ENCODE measurements at regions of chr5 and their contacts with region 1.

Region 1: DNA sequence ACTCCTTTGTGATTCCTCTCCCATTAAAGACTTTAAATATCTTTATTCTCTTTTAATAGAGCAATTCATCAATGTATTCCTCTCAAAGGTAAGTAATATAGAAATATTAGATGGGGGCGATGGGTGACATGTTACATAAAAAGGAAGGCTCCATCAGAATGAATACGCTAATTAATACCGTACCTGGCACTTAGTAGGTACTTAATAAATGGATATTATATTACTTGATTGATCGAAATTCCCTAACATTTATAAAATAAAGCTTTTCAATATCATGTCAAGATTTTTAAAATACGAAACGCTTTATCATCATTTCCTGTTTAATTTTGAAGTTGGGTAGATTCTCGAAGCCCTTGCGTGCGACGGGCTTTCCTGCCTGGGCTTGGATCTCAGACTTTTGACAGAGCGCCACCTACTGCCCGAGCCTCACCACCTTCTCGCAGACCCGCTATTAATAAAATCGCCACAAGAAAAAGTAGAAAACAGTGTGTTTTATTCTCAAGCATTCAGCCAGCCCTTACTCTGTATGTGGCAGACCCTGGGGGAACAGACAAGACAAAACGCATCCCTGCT is 99.4 kb downstream of the C5orf15 start:
- DNase-seq: peak; percentile 21
- ATAC-seq: peak; percentile 84
- H3K4me3 ChIP-seq: no peak overlapping the region
- H3K27ac ChIP-seq: no peak overlapping the region
- H3K4me1 ChIP-seq: no peaks in the 10 kb centered on the region
- H3K27me3 ChIP-seq: peaks cover 0 to 31% of the 10 kb centered on the region in 2 experiments; a peak in 3 of 5 replicates
- CTCF ChIP-seq: peak; percentile 76
- EP300 ChIP-seq: no peak
- POLR2A ChIP-seq: no peak
- RAD21 ChIP-seq: no peak

Region 2: DNA sequence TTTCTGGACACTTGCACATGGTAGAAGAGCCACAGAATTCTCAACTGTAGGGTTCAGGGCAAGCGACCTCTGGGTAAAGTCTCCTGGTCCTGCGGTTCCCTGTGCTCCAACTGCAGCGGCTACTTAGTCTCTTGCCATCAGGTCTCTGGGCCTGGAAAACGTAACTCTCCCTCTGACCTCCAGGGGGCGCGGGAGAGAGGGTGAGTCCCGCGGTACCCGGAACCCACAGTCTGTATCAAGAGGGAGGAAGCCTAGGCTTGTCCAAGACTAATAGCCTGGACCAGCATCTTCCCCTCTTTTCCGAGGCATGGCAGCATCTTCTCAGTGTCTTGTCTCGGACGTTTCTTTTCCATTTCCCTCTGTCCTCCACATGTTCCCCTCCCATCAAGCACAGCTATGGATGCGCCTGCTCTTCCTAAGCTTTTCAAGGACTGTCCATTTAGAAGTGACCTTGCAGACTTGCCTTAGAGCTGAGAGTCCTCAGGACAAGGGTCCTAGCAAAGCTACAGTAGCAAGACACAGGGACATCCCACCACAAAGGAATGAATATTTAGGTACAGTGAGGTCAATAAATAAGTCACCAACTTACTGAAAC is 316.0 kb before region 1 on chr5:
- CTCF ChIA-PET with region 1: interaction called, 4 read pairs
- POLR2A ChIA-PET with region 1: no interaction called
- in situ Hi-C with region 1: no loop called
- intact Hi-C with region 1: loop called (anchors 5 kb)
- DNase-seq: peak; percentile 25
- ATAC-seq: peak; percentile 91
- H3K4me3 ChIP-seq: no peak overlapping the region
- H3K27ac ChIP-seq: no peak overlapping the region
- H3K4me1 ChIP-seq: no peaks in the 10 kb centered on the region
- H3K27me3 ChIP-seq: no peaks in the 10 kb centered on the region
- CTCF ChIP-seq: peak; percentile 76
- EP300 ChIP-seq: no peak
- POLR2A ChIP-seq: no peak
- RAD21 ChIP-seq: peak; percentile 29; the same call in 1 of the 2 replicates

Measured in HepG2 (cell line).